ENCODE measurements at regions of chr20 and their contacts with region 1.

Region 1: DNA sequence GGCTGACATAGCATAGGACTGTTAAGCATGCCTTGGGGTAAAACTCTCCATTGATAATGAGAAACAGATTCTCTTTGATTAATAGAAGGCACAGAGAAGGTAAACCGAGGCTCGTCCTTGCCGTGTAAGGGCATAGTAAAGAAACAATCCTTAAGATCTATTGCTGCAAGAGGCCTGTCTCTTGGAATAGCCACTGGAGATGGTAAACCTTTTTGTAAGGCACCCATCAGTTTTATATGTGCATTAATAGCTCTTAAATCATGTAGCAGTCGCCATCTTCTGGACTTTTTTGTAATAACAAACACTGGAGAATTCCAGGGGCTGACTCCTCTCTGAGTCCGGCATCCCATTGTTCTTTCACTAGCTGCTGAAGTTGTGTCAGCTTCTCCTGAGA is 8.4 kb upstream of the ABHD12 start:
- DNase-seq: peak in 29 of 42 donors; percentile 17 to 86 (median 56)

Region 2: DNA sequence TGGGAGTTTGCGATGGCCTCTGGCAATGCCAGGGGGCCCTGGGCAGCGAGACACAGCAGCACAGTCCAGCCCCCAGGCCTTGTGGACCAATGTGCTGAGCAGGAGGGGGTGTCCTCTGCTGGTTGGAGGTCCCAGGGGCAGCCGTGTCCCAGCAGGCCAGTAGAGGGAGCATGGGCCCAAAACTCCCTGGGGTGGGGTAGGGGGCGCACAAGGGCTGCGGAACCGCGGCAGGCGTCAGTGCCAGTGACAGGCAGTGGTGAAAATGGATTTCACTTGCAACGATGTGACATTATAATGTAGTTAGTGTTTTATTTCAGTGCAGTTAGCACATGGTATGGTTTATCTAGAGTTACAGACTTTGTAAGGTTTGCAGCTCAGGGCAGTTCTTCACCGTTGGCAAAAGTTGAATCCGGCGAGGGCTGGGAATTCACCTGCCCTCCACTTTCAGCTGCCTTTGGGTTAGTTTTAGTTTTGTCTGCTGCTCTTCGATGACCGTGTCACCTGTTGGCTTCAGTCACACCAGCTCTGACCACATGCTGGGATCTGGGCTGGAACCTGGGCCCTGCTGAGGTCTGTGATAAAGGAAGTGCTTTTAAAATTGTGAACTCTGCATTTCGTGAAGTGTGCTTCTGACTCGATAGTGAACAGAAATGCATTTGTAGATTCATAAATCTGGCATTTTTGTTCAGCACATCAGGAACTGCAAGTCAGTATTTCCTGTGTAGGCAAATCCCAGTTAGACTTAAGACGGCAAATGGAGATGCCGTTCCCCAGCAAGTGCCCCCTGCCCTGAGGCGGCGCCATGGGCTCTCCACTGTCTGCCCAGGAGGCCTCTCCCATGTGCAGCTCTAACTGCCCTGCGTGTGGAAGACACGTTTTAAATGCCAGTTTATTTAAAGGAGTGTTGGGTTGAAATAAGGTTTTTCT is 104.3 kb before region 1 on chr20:
- intact Hi-C with region 1: loop called (anchors 5 kb)
- DNase-seq: peak; percentile 54 to 91 (median 80)

Measured in head of caudate nucleus (tissue), 42 donors.